CD8-positive, alpha-beta T cell (primary cell): ENCODE measurements at regions of chr11 and their contacts with region 1.

Region 1: GRCh38 chr11:82945682-82946081 is 44.1 kb downstream of the DDIAS start:
- DNase-seq: no peak
- ATAC-seq: no peak
- H3K4me3 ChIP-seq: no peak overlapping the region
- H3K4me3 Mint-ChIP-seq: no peak overlapping the region
- H3K27ac ChIP-seq: no peak overlapping the region
- H3K27ac Mint-ChIP-seq: no peak overlapping the region
- H3K4me1 ChIP-seq: no peaks in the 10 kb centered on the region
- H3K4me1 Mint-ChIP-seq: peaks cover 10% of the 10 kb centered on the region
- H3K27me3 ChIP-seq: no peaks in the 10 kb centered on the region
- H3K27me3 Mint-ChIP-seq: no peaks in the 10 kb centered on the region
- CTCF ChIP-seq: no peak

Region 2: DNA sequence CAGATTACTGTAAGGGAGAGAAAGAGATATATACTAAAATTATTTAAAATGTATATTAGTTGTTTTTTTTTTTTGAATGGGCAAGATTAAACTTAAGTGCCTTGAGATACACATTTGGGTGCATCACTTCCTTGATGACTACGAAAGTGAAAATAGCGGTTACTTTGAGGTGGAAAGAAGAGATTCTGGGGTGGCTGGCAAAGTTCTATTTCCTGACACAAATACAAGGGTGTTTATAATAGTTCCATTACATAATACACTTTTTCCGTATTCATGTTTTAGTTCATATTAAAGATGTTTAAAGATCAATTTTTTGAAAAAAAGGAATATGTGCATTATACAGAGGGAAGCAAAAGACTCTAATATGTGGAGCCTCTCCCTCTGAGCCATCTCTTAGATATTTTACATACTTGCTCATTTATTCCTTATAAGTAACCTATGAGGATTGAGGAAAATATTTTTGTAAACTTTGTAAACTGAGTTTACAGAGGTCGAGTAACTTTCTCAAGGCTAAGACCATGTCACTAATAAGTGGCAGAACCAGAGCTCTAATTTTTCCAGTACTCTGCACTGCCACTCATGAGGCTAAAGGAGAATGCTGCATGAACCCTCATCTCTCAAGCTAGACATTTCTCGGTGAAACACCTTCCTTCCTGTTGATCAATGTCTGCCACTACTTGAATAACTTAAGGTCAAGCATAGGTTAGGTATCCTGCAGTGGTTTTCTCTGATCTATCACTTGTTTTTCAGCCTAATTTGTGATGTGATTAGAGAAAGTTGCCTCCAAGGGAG is 14.5 kb after region 1 on chr11:
- CTCF ChIA-PET with region 1: interaction called, 7 read pairs
- POLR2A ChIA-PET with region 1: interaction called, 10 read pairs
- intact Hi-C with region 1: no loop called
- DNase-seq: peak in 7 of 9 experiments; percentile 25 to 89 (median 42)
- ATAC-seq: peak; percentile 78
- H3K4me3 ChIP-seq: peak overlapping the region; percentile 23 to 38
- H3K4me3 Mint-ChIP-seq: peak overlapping the region; percentile 55
- H3K27ac ChIP-seq: peak overlapping the region; percentile 79 to 89
- H3K27ac Mint-ChIP-seq: peak overlapping the region; percentile 98
- H3K4me1 ChIP-seq: peaks cover 92% of the 10 kb centered on the region
- H3K4me1 Mint-ChIP-seq: peaks cover 87% of the 10 kb centered on the region
- H3K27me3 ChIP-seq: no peaks in the 10 kb centered on the region
- H3K27me3 Mint-ChIP-seq: no peaks in the 10 kb centered on the region
- CTCF ChIP-seq: no peak